Activated B cell treated with CpG ODN at 0.5 μM for 24 hours (primary cell): ENCODE measurements at regions of chr10 and their contacts with region 1.

Region 1: DNA sequence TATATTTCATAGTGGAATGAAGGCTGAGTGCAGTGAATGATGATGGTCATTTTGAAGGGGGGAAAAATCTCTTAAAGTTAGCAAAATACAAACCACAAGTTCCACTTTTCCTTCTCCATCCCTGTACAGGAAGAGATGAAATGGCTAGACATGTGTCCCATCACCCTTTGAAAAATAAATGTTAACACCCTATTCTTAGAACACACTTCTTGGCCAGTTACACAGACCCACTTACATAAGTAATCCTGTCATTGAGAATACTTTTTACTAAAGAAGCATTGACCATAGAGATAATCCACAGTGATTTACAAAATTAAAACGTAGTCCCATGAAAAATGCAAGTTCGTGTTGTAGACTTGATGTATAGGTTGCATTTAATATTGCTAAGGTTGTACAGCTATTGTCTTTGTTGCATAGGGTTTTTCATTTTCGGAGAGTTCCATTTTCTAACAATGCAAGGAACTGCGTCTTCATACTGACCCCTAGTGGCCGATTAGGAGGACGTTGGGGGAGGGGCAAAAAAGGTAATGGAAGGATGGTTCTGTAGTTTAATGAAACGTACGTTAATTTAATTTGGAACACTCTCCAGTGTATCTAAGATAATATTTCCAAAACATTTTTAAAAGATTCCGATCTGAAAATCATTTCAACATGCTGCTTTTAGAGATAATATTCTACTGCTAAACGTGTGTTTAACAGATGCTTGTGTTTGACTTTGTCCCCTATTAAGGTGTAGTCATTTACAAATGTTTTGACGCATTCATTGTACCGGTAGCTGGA is 60.9 kb downstream of the ARMC3 start:
- DNase-seq: peak; percentile 28
- ATAC-seq: peak; percentile 70
- H3K4me3 Mint-ChIP-seq: no peak overlapping the region
- H3K27ac Mint-ChIP-seq: peak overlapping the region; percentile 10
- H3K4me1 Mint-ChIP-seq: peaks cover 8% of the 10 kb centered on the region
- H3K27me3 Mint-ChIP-seq: peaks cover 11% of the 10 kb centered on the region
- CTCF ChIP-seq: peak; percentile 37

Region 2: GRCh38 chr10:22003079-22003913 is 985.5 kb before region 1 on chr10 and contains the start of gene DNAJC1:
- CTCF ChIA-PET with region 1: interaction called, 8 read pairs
- POLR2A ChIA-PET with region 1: interaction called, 15 read pairs
- intact Hi-C with region 1: no loop called
- DNase-seq: peak; percentile 98
- ATAC-seq: peak; percentile 92
- H3K4me3 Mint-ChIP-seq: peak within 1 kb of the TSS; percentile 87
- H3K27ac Mint-ChIP-seq: peak within 1 kb of the TSS; percentile 91
- H3K4me1 Mint-ChIP-seq: peaks cover 41% of the 10 kb centered on the region
- H3K27me3 Mint-ChIP-seq: no peaks in the 10 kb centered on the region
- CTCF ChIP-seq: no peak
- total RNA-seq, gene DNAJC1: 9.2 and 10.9 TPM in 2 replicates

Region 3: DNA sequence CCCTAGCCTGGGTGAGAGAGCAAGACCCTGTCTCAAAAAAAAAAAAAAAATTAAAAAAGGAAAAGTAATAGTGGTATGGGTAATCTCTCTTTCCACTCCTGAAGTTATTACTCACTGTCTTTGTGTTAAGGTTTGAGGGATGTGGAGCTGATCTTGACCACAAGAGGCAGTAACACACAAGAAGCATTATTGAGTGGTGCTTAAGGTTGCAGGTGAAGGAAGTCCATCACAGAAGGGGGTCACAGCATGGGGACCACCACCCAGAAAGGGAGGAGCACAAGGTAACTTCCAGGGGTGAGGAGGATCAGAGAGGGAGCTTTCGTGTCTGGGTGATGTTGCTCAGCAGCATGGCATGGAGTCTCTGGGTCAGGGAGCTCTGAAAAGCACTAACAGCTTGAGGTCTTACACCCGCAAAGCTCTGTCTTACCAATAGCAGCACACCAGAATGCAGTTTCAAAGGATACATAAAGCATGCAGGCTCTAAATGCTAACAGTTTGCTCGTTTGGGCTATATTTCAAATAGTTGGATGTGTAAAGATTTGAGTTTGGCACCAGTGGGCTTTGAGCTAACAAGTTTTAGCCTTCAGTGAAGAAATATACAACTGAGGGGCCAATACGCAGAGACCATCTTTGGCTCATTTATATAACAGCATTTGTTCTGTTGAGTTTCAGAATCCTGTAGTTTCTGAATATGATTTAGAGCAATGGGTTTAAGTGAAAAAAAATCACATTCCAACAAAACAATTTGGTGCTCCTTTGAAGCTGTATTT is 884.9 kb before region 1 on chr10:
- CTCF ChIA-PET with region 1: interaction called, 3 read pairs
- POLR2A ChIA-PET with region 1: no interaction called
- intact Hi-C with region 1: loop called (anchors 10 kb)
- DNase-seq: no peak
- ATAC-seq: peak; percentile 37
- H3K4me3 Mint-ChIP-seq: no peak overlapping the region
- H3K27ac Mint-ChIP-seq: no peak overlapping the region
- H3K4me1 Mint-ChIP-seq: no peaks in the 10 kb centered on the region
- H3K27me3 Mint-ChIP-seq: peaks cover 6% of the 10 kb centered on the region
- CTCF ChIP-seq: no peak

Region 4: GRCh38 chr10:22316285-22317120 is 672.3 kb before region 1 on chr10 and contains the start of gene COMMD3:
- CTCF ChIA-PET with region 1: interaction called, 3 read pairs
- POLR2A ChIA-PET with region 1: no interaction called
- intact Hi-C with region 1: loop called (anchors 5 kb)
- DNase-seq: peak; percentile 86
- ATAC-seq: peak; percentile 65
- H3K4me3 Mint-ChIP-seq: peak within 1 kb of the TSS; percentile 97
- H3K27ac Mint-ChIP-seq: peak within 1 kb of the TSS; percentile 98
- H3K4me1 Mint-ChIP-seq: peaks cover 40% of the 10 kb centered on the region
- H3K27me3 Mint-ChIP-seq: no peaks in the 10 kb centered on the region
- CTCF ChIP-seq: no peak
- total RNA-seq, gene COMMD3: 68.2 and 72.8 TPM in 2 replicates

Region 5: GRCh38 chr10:22550732-22551131 is 438.0 kb before region 1 on chr10:
- CTCF ChIA-PET with region 1: interaction called, 13 read pairs
- POLR2A ChIA-PET with region 1: no interaction called
- intact Hi-C with region 1: loop called (anchors 1 kb)
- DNase-seq: peak; percentile 50
- ATAC-seq: peak; percentile 64
- H3K4me3 Mint-ChIP-seq: no peak overlapping the region
- H3K27ac Mint-ChIP-seq: no peak overlapping the region
- H3K4me1 Mint-ChIP-seq: peaks cover 3% of the 10 kb centered on the region
- H3K27me3 Mint-ChIP-seq: no peaks in the 10 kb centered on the region
- CTCF ChIP-seq: no peak

Region 6: GRCh38 chr10:22630234-22631174 is 358.3 kb before region 1 on chr10:
- CTCF ChIA-PET with region 1: no interaction called
- POLR2A ChIA-PET with region 1: no interaction called
- intact Hi-C with region 1: no loop called
- DNase-seq: no peak
- ATAC-seq: peak; percentile 85
- H3K4me3 Mint-ChIP-seq: peak overlapping the region; percentile 75
- H3K27ac Mint-ChIP-seq: peak overlapping the region; percentile 95
- H3K4me1 Mint-ChIP-seq: peaks cover 96% of the 10 kb centered on the region
- H3K27me3 Mint-ChIP-seq: no peaks in the 10 kb centered on the region
- CTCF ChIP-seq: no peak

Region 7: DNA sequence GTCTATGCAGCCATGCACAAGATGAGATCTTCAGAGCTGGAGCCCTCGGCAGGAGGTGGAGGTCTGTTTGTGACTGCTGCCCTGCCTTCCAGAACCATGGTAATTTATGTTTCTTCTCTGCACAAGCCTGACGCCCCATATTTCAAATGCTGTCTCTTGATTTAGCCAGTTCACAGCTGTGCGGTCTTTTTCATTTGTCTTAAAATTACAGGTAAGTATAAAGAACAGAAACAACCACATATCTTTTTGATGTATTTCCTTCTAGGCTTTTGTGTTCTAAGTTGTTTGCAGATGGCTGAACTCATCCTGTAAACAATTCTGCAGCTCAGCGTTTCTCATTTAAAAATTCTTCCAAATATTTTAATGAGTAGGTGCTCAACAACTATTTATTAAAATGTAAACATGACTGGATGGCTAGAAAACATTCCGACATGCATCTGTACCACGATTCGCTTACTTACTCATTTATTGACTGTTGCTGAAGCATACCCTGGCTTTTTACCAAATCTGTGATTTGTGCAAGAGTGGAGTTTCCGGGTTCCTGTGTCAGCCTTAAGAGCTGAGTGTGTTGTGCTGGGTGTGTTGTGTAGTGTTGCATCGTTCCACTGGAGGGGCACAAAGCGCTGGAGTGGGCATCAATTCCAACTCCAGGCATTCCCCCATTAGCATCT is 333.3 kb before region 1 on chr10:
- CTCF ChIA-PET with region 1: no interaction called
- POLR2A ChIA-PET with region 1: no interaction called
- intact Hi-C with region 1: loop called (anchors 5 kb)
- DNase-seq: no peak
- ATAC-seq: peak; percentile 41
- H3K4me3 Mint-ChIP-seq: peak overlapping the region; percentile 35
- H3K27ac Mint-ChIP-seq: peak overlapping the region; percentile 72
- H3K4me1 Mint-ChIP-seq: peaks cover 98% of the 10 kb centered on the region
- H3K27me3 Mint-ChIP-seq: no peaks in the 10 kb centered on the region
- CTCF ChIP-seq: no peak

Region 8: GRCh38 chr10:22954970-22955369 is 33.8 kb before region 1 on chr10:
- CTCF ChIA-PET with region 1: no interaction called
- POLR2A ChIA-PET with region 1: no interaction called
- intact Hi-C with region 1: no loop called
- DNase-seq: no peak
- ATAC-seq: no peak
- H3K4me3 Mint-ChIP-seq: no peak overlapping the region
- H3K27ac Mint-ChIP-seq: no peak overlapping the region
- H3K4me1 Mint-ChIP-seq: no peaks in the 10 kb centered on the region
- H3K27me3 Mint-ChIP-seq: no peaks in the 10 kb centered on the region
- CTCF ChIP-seq: no peak

Region 9: GRCh38 chr10:23067939-23068775 is 79.4 kb after region 1 on chr10:
- CTCF ChIA-PET with region 1: no interaction called
- POLR2A ChIA-PET with region 1: no interaction called
- intact Hi-C with region 1: loop called (anchors 1 kb)
- DNase-seq: peak; percentile 41
- ATAC-seq: peak; percentile 58
- H3K4me3 Mint-ChIP-seq: no peak overlapping the region
- H3K27ac Mint-ChIP-seq: no peak overlapping the region
- H3K4me1 Mint-ChIP-seq: no peaks in the 10 kb centered on the region
- H3K27me3 Mint-ChIP-seq: peaks cover 10% of the 10 kb centered on the region
- CTCF ChIP-seq: no peak

Region 10: GRCh38 chr10:24777196-24777595 is 1788.4 kb after region 1 on chr10:
- CTCF ChIA-PET with region 1: no interaction called
- POLR2A ChIA-PET with region 1: no interaction called
- intact Hi-C with region 1: no loop called
- DNase-seq: no peak
- ATAC-seq: no peak
- H3K4me3 Mint-ChIP-seq: no peak overlapping the region
- H3K27ac Mint-ChIP-seq: no peak overlapping the region
- H3K4me1 Mint-ChIP-seq: no peaks in the 10 kb centered on the region
- H3K27me3 Mint-ChIP-seq: no peaks in the 10 kb centered on the region
- CTCF ChIP-seq: no peak